Common myeloid progenitor, CD34-positive (primary cell): ENCODE measurements at regions of chr10 and their contacts with region 1.

Region 1: DNA sequence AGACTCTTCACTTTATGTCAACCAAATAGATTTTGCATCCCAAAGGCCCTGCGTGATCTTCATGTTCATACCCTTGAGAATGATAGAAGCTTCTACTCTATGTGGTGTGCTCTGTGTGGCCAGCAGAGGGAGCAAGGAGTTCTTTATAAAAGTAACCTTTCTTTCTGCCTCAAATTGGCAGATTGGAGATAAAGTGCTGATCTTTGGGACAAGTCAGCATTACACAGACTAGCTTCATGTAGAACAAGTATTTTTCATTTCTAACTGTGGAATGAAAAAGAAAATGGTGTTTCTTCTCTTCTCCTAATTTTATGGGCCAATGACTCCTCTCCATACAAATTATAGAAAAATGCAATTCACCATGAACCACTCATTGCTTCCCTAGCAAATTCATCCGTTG is 1214.1 kb downstream of the SORCS1 start:
- DNase-seq: peak; percentile 29 to 45 (median 38)
- H3K4me3 ChIP-seq: no peak overlapping the region
- H3K27ac ChIP-seq: no peak overlapping the region
- H3K4me1 ChIP-seq: peaks cover 0 to 2% (median 0%) of the 10 kb centered on the region in 4 experiments
- H3K27me3 ChIP-seq: no peaks in the 10 kb centered on the region

Region 2: DNA sequence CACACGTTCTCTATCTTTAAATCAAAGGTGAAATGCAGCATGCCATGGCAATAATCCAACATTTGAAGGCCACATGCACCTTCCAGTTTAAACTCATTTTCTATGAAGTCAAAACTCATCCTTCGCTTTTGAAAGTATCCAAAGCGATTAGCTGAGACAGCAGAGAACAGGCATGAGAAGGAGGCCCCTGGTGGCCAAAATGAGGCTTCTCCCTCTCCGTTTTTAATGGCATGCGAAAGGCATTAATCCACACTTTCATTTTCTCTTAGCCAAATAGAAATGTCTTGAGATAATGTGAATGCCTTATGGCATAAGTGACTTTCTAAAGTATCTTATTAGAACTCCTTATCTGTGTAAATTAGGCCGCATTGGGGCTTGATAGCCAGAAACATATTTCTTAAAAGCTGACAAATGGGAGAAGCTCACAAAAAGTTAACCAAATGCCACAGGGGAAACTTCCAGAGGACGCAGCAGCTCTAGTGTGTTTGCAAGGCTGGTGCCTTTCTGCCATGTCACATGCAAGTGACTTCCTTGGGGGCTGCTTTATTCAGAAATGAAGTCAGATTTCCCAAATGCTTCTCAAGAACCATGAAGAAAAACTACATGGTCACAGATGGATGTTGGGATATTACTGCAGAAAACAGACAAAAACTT is 24.5 kb after region 1 on chr10:
- CTCF ChIA-PET with region 1: interaction called, 10 read pairs
- POLR2A ChIA-PET with region 1: no interaction called
- DNase-seq: peak; percentile 11 to 29 (median 26)
- H3K4me3 ChIP-seq: peak overlapping the region in 3 of 7 experiments; percentile 8 to 63 (median 51)
- H3K27ac ChIP-seq: no peak overlapping the region
- H3K4me1 ChIP-seq: no peaks in the 10 kb centered on the region
- H3K27me3 ChIP-seq: peaks cover 0 to 2% (median 0%) of the 10 kb centered on the region in 5 experiments

Region 3: GRCh38 chr10:105986912-105987635 is 36.7 kb after region 1 on chr10:
- CTCF ChIA-PET with region 1: no interaction called
- POLR2A ChIA-PET with region 1: no interaction called
- DNase-seq: no peak
- H3K4me3 ChIP-seq: no peak overlapping the region
- H3K27ac ChIP-seq: no peak overlapping the region
- H3K4me1 ChIP-seq: no peaks in the 10 kb centered on the region
- H3K27me3 ChIP-seq: peaks cover 0 to 2% (median 0%) of the 10 kb centered on the region in 5 experiments

Region 4: DNA sequence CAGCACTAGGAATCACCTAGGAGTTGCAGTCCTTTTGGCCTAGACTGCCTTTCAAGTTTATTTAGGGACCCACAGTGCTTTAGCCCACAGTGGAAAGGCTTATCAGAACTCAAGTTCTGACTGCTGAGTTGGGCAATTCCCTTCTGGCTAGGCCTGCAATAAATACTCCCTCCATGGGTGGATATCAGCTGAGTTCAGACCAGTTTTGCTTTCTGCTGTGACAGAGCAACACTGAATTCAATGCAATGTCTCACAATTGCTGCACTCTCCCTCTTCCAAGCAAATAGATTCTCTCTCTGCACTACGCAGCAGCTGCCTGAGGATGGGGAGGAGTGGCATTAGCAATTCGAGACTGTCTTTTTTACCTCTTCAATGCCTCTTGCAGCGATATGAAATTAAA is 60.8 kb after region 1 on chr10:
- CTCF ChIA-PET with region 1: no interaction called
- POLR2A ChIA-PET with region 1: no interaction called
- DNase-seq: no peak
- H3K4me3 ChIP-seq: no peak overlapping the region
- H3K27ac ChIP-seq: no peak overlapping the region
- H3K4me1 ChIP-seq: no peaks in the 10 kb centered on the region
- H3K27me3 ChIP-seq: no peaks in the 10 kb centered on the region

Region 5: DNA sequence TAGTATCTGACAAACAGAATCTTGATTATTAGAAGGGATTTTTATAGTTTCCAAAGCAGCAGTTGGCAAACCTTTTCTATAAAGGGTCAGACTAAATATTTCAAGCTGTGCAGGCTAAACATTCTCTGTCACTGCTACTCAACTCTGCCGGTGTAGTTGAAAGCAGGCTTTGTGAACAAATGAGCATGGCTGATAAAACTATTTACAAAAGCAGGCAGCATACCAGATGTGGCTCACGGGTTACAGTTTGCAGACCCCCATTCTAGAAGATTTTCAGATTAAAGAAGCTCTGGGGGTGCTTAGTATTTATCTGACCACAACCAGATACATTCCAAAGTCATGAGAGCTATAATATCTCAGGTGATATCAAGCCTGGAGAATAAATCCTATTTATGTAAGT is 196.6 kb after region 1 on chr10:
- CTCF ChIA-PET with region 1: no interaction called
- POLR2A ChIA-PET with region 1: no interaction called
- DNase-seq: no peak
- H3K4me3 ChIP-seq: no peak overlapping the region
- H3K27ac ChIP-seq: no peak overlapping the region
- H3K4me1 ChIP-seq: no peaks in the 10 kb centered on the region
- H3K27me3 ChIP-seq: no peaks in the 10 kb centered on the region